ENCODE measurements at regions of chr17 and their contacts with region 1.

Region 1: GRCh38 chr17:34420254-34420766 is 57.3 kb upstream of the CCL1 start:
- DNase-seq: peak; percentile 63
- H3K4me3 Mint-ChIP-seq: no peak overlapping the region
- H3K27ac Mint-ChIP-seq: no peak overlapping the region
- H3K4me1 Mint-ChIP-seq: no peaks in the 10 kb centered on the region
- H3K27me3 Mint-ChIP-seq: peaks cover 1% of the 10 kb centered on the region
- CTCF ChIP-seq: peak; percentile 96

Region 2: GRCh38 chr17:34318474-34318873 is 101.8 kb before region 1 on chr17:
- CTCF ChIA-PET with region 1: no interaction called
- POLR2A ChIA-PET with region 1: no interaction called
- intact Hi-C with region 1: no loop called
- DNase-seq: no peak
- H3K4me3 Mint-ChIP-seq: no peak overlapping the region
- H3K27ac Mint-ChIP-seq: no peak overlapping the region
- H3K4me1 Mint-ChIP-seq: peaks cover 9% of the 10 kb centered on the region
- H3K27me3 Mint-ChIP-seq: no peaks in the 10 kb centered on the region
- CTCF ChIP-seq: no peak

Region 3: DNA sequence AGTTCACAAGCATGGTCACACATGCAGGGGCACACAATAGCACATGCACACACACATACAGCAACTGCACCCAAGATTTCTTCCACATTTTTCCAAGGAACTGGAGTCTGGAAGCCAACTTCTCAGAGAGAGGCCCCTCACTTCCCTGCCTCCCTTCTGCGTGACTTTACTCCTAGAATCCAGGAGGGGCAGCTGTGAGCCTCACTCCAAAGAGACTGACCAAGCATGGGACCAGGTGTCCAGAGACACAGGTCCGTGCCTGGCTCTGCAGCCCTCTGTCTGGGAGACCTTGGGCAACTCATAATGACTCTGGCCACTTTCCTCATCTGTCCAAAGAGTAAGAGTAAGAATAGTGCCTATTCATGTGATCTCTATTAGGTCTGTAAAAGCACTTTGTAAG is 54.4 kb after region 1 on chr17:
- CTCF ChIA-PET with region 1: no interaction called
- POLR2A ChIA-PET with region 1: no interaction called
- intact Hi-C with region 1: no loop called
- DNase-seq: no peak
- H3K4me3 Mint-ChIP-seq: no peak overlapping the region
- H3K27ac Mint-ChIP-seq: no peak overlapping the region
- H3K4me1 Mint-ChIP-seq: no peaks in the 10 kb centered on the region
- H3K27me3 Mint-ChIP-seq: no peaks in the 10 kb centered on the region
- CTCF ChIP-seq: no peak

Region 4: DNA sequence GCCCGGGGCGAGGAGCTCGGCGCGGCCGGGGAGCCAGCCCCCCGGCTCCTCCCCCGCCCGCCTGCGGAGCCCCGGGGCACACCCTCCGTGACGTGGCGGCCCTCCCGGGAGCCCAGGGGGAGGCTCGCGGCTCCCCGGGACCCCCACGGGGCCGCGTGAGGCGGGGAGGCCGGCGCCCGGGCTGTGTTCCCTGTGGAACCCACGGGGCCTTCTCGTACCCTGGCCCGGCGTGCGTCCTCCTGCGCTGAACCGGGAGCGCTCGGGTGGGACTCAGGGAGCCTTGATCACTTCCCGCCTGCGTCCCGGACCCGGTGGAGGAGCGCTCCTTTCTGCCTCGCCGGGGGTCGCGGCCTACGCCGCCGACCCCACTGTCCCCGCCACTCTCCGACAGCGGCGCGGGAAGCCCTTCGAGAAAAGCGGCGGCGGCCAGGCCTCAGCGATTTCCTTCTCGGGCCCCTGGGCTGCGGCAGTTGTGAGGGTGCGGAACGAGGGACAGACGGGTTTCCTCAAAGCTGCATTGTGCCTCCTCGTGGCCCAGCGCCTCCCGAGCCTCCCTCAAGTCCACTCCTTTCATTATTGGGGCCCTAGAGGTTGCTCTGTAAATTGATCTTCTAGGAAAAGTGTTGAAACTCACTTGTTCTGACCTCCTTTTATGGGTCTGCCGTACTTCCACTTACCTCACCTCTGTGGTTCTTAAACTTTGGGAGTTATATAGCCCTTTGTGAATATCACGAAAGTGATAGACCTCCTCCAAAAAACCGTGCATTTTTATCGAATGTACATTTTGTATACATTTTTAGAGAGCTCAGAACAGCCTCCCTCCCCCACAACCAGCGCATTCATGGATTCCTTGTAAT is 560.6 kb after region 1 on chr17:
- CTCF ChIA-PET with region 1: interaction called, 8 read pairs
- POLR2A ChIA-PET with region 1: no interaction called
- intact Hi-C with region 1: loop called (anchors 5 kb)
- DNase-seq: peak; percentile 83
- H3K4me3 Mint-ChIP-seq: peak overlapping the region; percentile 75
- H3K27ac Mint-ChIP-seq: peak overlapping the region; percentile 89
- H3K4me1 Mint-ChIP-seq: peaks cover 27% of the 10 kb centered on the region
- H3K27me3 Mint-ChIP-seq: no peaks in the 10 kb centered on the region
- CTCF ChIP-seq: peak; percentile 39

Region 5: DNA sequence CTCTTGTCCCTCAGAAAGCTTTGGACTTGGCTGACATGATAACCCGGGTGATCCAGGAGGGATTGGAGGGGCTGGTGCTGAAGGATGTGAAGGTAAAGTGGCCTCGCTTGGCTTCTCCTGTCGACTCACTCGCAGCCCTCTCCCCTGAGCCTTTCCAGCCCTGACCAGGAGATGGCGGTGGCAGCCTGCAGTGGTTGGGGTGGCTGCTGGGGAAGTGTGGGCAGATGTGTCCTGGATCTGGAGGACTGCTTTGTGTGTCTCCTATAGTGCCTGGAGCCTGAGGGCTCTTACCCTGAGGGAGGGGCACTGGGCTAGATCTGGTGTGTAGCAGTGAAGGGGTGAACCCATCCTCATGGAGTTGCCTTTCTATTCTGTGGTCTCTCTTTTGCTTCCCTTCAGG is 577.9 kb after region 1 on chr17:
- CTCF ChIA-PET with region 1: no interaction called
- POLR2A ChIA-PET with region 1: no interaction called
- intact Hi-C with region 1: loop called (anchors 1 kb)
- DNase-seq: peak; percentile 64
- H3K4me3 Mint-ChIP-seq: no peak overlapping the region
- H3K27ac Mint-ChIP-seq: no peak overlapping the region
- H3K4me1 Mint-ChIP-seq: no peaks in the 10 kb centered on the region
- H3K27me3 Mint-ChIP-seq: no peaks in the 10 kb centered on the region
- CTCF ChIP-seq: peak; percentile 85

Region 6: DNA sequence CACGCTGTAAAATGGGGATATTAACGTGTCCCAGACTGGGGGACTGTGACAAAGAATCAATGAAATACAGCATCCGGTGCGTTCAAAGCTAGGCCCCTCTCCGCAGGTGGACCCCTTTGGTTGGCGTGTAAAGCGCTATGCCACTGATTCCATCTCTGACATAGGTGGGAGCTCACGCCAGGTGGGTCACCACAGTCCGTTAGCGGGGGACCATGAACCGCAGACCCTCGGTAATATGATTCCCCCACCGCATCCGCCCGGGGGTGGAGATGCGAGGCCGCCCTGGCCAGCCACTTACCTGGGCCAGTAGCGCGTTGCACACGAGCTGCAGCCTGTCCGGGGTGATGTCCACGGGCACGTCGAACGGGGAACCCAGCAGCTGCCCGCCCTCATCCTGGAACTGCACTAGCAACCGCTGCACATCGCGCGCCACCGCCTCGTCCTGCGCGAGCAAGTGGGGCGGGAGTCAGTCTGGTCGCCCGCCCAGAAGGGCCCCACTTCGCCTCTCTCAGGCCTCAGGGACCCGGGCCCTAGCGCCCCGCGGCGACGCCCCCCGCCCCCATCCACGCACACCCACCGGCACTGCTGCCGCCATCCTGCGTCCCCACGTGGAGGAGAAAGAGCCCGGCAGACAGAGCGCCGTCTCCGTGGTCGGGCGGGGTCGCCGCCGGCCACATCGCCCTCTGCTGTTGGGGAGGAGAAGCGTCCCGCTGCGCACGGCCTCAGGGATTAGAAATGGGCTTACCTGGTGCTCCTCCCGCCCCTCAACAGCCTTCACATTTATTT is 721.6 kb after region 1 on chr17 and contains the start of gene NLE1:
- CTCF ChIA-PET with region 1: interaction called, 5 read pairs
- POLR2A ChIA-PET with region 1: no interaction called
- intact Hi-C with region 1: loop called (anchors 1 kb)
- DNase-seq: peak; percentile 73
- H3K4me3 Mint-ChIP-seq: peak within 1 kb of the TSS; percentile 73
- H3K27ac Mint-ChIP-seq: no peak within 1 kb of the TSS
- H3K4me1 Mint-ChIP-seq: peaks cover 4% of the 10 kb centered on the region
- H3K27me3 Mint-ChIP-seq: no peaks in the 10 kb centered on the region
- CTCF ChIP-seq: peak; percentile 96
- total RNA-seq, gene NLE1: 24.3 and 36.2 TPM in 2 replicates

Region 7: GRCh38 chr17:35540589-35541404 is 1120.5 kb after region 1 on chr17:
- CTCF ChIA-PET with region 1: interaction called, 3 read pairs
- POLR2A ChIA-PET with region 1: no interaction called
- intact Hi-C with region 1: loop called (anchors 1 kb)
- DNase-seq: peak; percentile 27
- H3K4me3 Mint-ChIP-seq: peak overlapping the region; percentile 43
- H3K27ac Mint-ChIP-seq: no peak overlapping the region
- H3K4me1 Mint-ChIP-seq: no peaks in the 10 kb centered on the region
- H3K27me3 Mint-ChIP-seq: peaks cover 11% of the 10 kb centered on the region
- CTCF ChIP-seq: no peak

Measured in MCF 10A (cell line).